WTC11 (cell line): ENCODE measurements at regions of chr16 and their contacts with region 1.

Region 1: DNA sequence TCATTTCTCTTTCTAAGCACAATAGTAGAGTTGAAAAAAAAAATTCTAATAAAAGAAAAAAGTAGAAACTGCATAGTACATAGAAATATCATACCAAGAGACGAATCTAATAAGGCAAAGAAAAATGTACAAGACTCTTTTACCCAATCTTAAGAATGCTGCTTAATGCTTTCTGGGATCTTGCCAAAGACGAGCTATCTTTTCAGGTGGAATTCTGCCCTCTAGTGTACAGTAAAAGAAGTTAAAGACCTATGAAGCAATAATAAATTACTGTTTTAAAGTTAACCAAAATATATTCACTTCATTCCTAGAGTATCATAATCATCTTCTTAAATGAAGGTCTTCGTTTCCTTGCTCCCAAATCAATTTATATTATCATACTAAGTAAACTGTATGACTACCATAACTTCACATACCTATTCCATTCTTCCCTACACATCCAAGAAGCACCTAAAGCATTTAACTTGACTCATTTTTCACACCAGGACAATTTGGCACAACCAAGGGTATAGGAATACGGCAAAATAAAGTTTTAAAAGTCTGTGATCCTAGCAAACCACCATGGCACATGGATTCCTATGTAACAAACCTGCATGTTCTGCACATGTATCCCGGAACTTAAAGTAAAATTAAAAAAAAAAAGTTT is 47.7 kb downstream of the CFDP1 start:
- DNase-seq: no peak
- ATAC-seq: peak; percentile 28; the same call in 1 of the 2 replicates
- H3K4me3 Mint-ChIP-seq: no peak overlapping the region
- H3K27ac Mint-ChIP-seq: peak overlapping the region; percentile 5; the same call in 1 of the 2 replicates
- H3K4me1 Mint-ChIP-seq: no peaks in the 10 kb centered on the region
- H3K27me3 Mint-ChIP-seq: no peaks in the 10 kb centered on the region
- CTCF ChIP-seq: peak; percentile 52

Region 2: DNA sequence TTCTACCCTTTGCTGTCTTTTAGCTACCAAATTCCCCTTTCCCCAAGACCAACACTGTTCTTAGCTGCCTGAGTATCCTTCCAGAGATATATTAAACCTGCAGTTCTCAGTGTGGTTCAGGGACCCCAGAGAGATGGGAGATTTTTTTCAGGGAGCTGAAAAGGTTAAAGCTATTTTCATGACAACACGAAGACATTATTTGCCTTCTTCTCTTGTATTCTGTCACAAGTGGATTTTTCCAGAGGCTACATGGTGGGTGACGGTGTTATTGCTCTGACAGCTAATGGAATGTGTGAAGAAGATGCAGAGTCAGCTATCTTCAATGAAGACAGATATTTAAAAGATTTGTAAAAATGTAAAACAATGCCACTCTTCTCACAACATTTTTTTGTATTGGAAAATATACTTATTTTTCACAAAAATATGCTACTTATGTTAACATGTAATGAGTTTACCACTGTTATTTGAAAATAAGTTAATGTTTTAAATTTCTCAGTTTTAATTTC is 21.3 kb before region 1 on chr16:
- CTCF ChIA-PET with region 1: interaction called, 10 read pairs
- POLR2A ChIA-PET with region 1: no interaction called
- DNase-seq: no peak
- ATAC-seq: no peak
- H3K4me3 Mint-ChIP-seq: no peak overlapping the region
- H3K27ac Mint-ChIP-seq: no peak overlapping the region
- H3K4me1 Mint-ChIP-seq: peaks cover 3% of the 10 kb centered on the region; the same call in 1 of the 2 replicates
- H3K27me3 Mint-ChIP-seq: no peaks in the 10 kb centered on the region
- CTCF ChIP-seq: no peak

Region 3: GRCh38 chr16:75372236-75372856 is 13.3 kb before region 1 on chr16:
- CTCF ChIA-PET with region 1: interaction called, 12 read pairs
- POLR2A ChIA-PET with region 1: no interaction called
- DNase-seq: no peak
- ATAC-seq: no peak
- H3K4me3 Mint-ChIP-seq: no peak overlapping the region
- H3K27ac Mint-ChIP-seq: no peak overlapping the region
- H3K4me1 Mint-ChIP-seq: peaks cover 5% of the 10 kb centered on the region
- H3K27me3 Mint-ChIP-seq: no peaks in the 10 kb centered on the region
- CTCF ChIP-seq: no peak

Region 4: GRCh38 chr16:75415169-75415905 is 29.7 kb after region 1 on chr16:
- CTCF ChIA-PET with region 1: interaction called, 11 read pairs
- POLR2A ChIA-PET with region 1: no interaction called
- DNase-seq: no peak
- ATAC-seq: no peak
- H3K4me3 Mint-ChIP-seq: no peak overlapping the region
- H3K27ac Mint-ChIP-seq: peak overlapping the region; percentile 28
- H3K4me1 Mint-ChIP-seq: peaks cover 40% of the 10 kb centered on the region
- H3K27me3 Mint-ChIP-seq: no peaks in the 10 kb centered on the region
- CTCF ChIP-seq: no peak